HepG2 (cell line): ENCODE measurements at regions of chr17 and their contacts with region 1.

Region 1: GRCh38 chr17:45277216-45277849 is 15.4 kb upstream of the SPATA32 start:
- DNase-seq: peak; percentile 92
- ATAC-seq: peak; percentile 90
- H3K4me3 ChIP-seq: no peak overlapping the region
- H3K27ac ChIP-seq: peak overlapping the region; percentile 22
- H3K4me1 ChIP-seq: peaks cover 8% of the 10 kb centered on the region
- H3K27me3 ChIP-seq: no peaks in the 10 kb centered on the region
- CTCF ChIP-seq: peak; percentile 95
- EP300 ChIP-seq: 0 out of 4 replicates have a peak, but pooled peaks of 1 of the 2 experiments have one; percentile 20
- POLR2A ChIP-seq: no peak
- RAD21 ChIP-seq: peak; percentile 93

Region 2: DNA sequence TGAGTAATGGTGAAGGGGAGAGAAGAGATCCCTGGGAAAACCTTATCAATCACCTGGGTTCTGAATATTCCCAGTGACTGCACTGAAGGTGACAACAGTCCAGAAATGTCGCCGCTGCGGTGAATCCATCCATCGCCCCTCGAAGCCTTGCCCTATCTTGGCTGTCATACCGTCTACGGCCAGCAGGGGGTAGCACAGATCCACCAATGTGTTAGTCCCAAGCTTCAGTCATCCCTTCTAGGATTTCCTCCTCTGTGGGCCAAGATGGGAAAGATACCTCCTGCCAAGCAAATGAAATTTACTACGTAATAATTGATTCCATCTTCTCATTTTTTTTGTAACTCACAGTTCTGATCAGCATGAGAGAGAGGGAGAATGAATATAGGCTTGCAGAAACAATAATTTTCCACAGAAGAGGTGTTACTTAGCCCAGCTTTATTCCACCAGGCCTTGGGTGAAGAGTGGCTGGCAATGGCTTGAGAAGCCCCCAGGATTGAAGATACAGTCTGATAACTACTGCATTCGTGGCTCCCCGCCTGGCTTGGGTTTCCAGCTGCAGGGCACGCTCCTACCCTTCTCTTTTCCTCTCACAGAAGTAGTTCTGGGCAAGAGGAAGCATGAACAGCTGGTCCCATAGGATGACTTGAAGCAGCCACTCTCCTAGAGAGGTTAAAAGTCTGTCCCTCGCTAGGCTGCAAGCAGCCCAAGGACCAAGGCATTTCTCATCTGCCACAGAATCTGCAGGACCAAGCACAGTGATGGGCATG is 58.3 kb before region 1 on chr17:
- CTCF ChIA-PET with region 1: interaction called, 4 read pairs
- POLR2A ChIA-PET with region 1: no interaction called
- in situ Hi-C with region 1: no loop called
- intact Hi-C with region 1: loop called (anchors 5 kb)
- DNase-seq: peak; percentile 76
- ATAC-seq: peak; percentile 79
- H3K4me3 ChIP-seq: no peak overlapping the region
- H3K27ac ChIP-seq: no peak overlapping the region
- H3K4me1 ChIP-seq: peaks cover 6% of the 10 kb centered on the region; the same call in 1 of the 2 replicates
- H3K27me3 ChIP-seq: peaks cover 17 to 44% of the 10 kb centered on the region in 2 experiments; a peak in 4 of 5 replicates
- CTCF ChIP-seq: peak; percentile 98
- EP300 ChIP-seq: no peak
- POLR2A ChIP-seq: no peak
- RAD21 ChIP-seq: peak; percentile 94

Region 3: DNA sequence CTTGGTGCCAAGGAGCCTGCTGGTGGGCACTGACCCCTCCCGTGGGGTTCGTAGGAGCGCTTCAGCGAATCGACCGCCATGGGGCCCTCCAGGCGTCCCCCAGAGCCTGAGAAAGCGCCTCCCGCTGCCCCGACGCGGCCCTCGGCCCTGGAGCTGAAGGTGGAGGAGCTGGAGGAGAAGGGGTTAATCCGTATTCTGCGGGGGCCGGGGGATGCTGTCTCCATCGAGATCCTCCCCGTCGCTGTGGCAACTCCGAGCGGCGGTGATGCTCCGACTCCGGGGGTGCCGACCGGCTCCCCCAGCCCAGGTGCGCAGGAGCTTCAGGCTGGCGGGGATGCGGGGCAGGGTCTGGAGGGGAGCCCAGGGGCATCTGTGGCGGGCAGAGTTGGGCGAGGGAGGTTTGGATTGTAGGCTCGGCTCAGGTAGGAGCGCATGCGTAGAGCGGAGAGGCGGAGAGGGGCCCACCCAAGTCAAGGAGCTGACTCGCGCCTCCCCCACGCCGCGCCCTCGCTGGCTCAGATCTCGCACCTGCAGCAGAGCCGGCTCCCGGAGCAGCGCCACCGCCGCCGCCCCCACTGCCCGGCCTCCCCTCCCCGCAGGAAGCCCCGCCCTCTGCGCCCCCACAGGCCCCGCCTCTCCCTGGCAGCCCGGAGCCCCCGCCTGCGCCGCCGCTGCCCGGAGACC is 35.9 kb before region 1 on chr17:
- CTCF ChIA-PET with region 1: no interaction called
- POLR2A ChIA-PET with region 1: no interaction called
- in situ Hi-C with region 1: no loop called
- intact Hi-C with region 1: no loop called
- DNase-seq: no peak
- ATAC-seq: no peak
- H3K4me3 ChIP-seq: peak overlapping the region in 1 of 3 experiments; percentile 7; a peak in 1 of 6 replicates
- H3K27ac ChIP-seq: no peak overlapping the region
- H3K4me1 ChIP-seq: peaks cover 26% of the 10 kb centered on the region
- H3K27me3 ChIP-seq: peaks cover 13 to 68% of the 10 kb centered on the region in 2 experiments
- CTCF ChIP-seq: no peak
- EP300 ChIP-seq: no peak
- POLR2A ChIP-seq: no peak
- RAD21 ChIP-seq: no peak

Region 4: DNA sequence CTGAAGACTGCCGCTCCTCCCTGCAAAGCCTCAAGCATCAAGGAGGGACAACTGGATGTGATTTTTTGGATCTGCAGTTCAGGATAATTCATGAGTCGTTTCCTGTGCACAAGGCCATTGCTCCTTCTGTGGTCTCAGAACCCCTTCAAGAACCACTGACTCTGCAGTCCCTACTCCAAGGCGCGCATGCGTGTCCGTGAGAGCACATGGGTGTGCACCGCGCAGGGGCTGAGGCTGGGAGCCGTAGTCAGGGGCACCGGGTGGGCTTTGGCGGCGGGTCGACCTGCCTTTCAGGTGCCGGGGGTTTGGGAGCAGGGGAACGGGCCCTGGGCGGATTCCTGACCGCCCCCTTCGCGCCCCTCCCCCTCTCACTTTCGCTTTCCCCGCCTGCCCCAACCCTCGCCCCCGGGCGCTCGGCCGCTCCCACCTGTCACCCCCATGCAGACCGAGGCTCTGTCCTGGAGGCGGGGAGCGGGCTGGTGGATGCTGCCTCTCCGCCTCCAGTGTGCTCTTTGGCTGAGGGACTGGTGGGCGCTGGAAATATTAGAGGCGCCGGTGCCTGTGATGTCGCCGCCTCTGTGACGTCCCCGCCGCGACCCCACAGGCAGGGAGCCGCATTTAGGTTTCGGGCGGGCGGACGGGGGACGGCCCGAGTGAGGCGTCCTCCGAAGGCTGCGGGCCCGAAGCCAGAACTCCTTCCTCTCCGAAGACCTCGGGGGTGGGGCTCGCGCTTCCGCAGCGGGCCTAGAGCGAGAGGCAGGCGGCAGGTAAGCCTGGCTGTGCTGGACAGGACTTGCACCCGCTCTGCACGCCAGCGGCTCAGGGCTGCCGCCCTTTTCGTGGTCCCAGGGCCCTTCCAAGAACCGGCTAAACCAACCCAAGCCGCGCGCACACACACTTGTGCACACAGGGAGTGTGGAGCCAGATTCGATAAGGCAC is 15.5 kb before region 1 on chr17 and contains the start of gene SPATA32:
- CTCF ChIA-PET with region 1: no interaction called
- POLR2A ChIA-PET with region 1: no interaction called
- in situ Hi-C with region 1: no loop called
- intact Hi-C with region 1: no loop called
- DNase-seq: no peak
- ATAC-seq: no peak; the same call in 2 of the 3 replicates
- H3K4me3 ChIP-seq: no peak within 1 kb of the TSS
- H3K27ac ChIP-seq: no peak within 1 kb of the TSS
- H3K4me1 ChIP-seq: no peaks in the 10 kb centered on the region
- H3K27me3 ChIP-seq: peaks cover 0 to 12% of the 10 kb centered on the region in 2 experiments; a peak in 2 of 5 replicates
- CTCF ChIP-seq: no peak
- EP300 ChIP-seq: no peak
- POLR2A ChIP-seq: no peak
- RAD21 ChIP-seq: no peak
- total RNA-seq, gene SPATA32: not detected in 2 replicates

Region 5: DNA sequence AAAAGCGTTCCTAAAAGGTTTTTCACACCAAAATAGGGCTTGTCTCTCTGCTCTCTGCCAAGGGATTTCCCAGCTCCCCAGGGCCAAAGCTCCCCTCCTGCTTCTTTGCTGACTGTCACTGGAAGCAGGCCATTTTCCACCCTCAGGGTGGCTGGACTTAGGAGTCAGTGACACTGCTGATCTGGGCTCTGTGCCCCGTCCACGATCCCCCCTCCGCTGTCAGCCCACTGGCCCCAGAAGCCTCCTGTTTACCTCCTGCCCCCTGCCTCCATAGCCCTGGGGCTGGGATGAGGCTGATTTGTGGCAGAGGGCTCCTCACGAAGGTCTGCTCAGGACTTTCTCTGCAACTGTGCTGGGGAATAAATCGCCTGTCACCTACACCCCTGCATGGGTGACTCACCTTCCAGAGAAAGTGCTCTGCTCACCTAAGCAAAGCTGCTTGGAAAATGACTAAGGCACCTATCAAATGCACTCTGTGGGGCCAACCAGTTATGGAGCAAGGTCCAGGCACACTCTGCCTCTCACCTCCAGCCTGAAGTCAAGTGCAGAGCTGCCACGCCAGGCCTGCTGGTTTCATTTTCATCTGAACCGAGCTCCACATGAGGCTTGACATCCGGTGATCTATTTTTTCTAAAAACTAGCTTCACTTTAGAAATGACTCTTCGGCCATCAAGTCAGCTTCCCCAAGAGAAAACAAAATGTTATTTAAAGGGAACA is 34.6 kb after region 1 on chr17:
- CTCF ChIA-PET with region 1: interaction called, 3 read pairs
- POLR2A ChIA-PET with region 1: interaction called, 14 read pairs
- in situ Hi-C with region 1: no loop called
- intact Hi-C with region 1: loop called (anchors 2 kb)
- DNase-seq: peak; percentile 96
- ATAC-seq: peak; percentile 81
- H3K4me3 ChIP-seq: peak overlapping the region; percentile 21 to 64 (median 29); a peak in 5 of 6 replicates
- H3K27ac ChIP-seq: peak overlapping the region; percentile 78
- H3K4me1 ChIP-seq: peaks cover 73% of the 10 kb centered on the region
- H3K27me3 ChIP-seq: no peaks in the 10 kb centered on the region
- CTCF ChIP-seq: peak; percentile 22; the same call in 1 of the 2 replicates
- EP300 ChIP-seq: peak in 1 of 2 experiments; percentile 63; a peak in 1 of 4 replicates
- POLR2A ChIP-seq: no peak
- RAD21 ChIP-seq: peak; percentile 53

Region 6: DNA sequence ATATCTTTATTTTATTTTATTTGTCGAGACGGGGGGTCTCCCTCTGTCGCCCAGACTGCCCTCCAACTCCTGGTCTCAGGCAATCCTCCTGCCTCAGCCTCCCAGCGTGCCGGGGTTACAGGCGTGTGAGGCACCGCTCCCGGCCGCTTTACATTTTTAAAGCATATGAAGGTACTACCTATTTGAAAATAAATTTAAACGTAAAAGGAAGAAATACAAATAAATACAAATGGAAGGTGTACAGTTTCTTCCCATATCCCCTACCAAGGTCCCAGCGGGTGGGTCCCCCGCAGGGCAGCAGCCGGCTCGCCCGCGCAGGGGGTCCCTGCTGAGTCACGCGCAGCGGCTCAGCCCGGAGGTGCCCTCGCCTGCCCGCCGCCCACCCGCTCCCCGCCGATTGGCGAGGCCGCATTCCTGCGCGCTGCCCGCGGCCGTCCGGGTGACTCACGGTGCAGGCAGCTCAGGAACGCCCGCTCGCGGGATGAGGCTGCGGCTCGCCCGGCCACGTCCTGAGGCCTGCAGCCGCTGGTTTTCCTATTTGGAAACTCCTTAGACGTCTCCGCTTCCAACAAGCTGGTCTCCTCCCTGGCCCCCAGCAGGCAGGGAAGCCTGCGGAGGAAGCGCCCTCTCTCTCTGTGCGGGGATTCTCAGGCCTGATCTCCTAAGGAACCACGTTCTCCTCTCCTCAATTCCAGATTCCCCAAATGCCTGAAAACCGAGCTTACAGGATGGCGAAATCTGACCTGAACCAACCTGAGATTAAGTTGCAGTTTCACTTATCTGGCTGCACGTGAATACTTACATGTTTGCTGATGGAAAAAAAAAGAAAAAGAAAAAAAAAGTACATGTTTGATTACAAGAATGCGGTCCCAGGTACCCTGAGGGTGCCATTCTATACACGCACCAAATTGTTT is 94.3 kb after region 1 on chr17:
- CTCF ChIA-PET with region 1: no interaction called
- POLR2A ChIA-PET with region 1: interaction called, 11 read pairs
- in situ Hi-C with region 1: no loop called
- intact Hi-C with region 1: loop called (anchors 5 kb)
- DNase-seq: peak; percentile 89
- ATAC-seq: peak; percentile 97
- H3K4me3 ChIP-seq: peak overlapping the region; percentile 66 to 76 (median 67)
- H3K27ac ChIP-seq: peak overlapping the region; percentile 66
- H3K4me1 ChIP-seq: peaks cover 47% of the 10 kb centered on the region
- H3K27me3 ChIP-seq: peaks cover 0 to 3% of the 10 kb centered on the region in 2 experiments; a peak in 1 of 5 replicates
- CTCF ChIP-seq: peak; percentile 48
- EP300 ChIP-seq: peak in 1 of 2 experiments; percentile 18; a peak in 2 of 4 replicates
- POLR2A ChIP-seq: peak in 1 of 2 experiments; percentile 87; a peak in 2 of 4 replicates
- RAD21 ChIP-seq: peak; percentile 65